IMR-90 (cell line): ENCODE measurements at regions of chr1 and their contacts with region 1.

Region 1: DNA sequence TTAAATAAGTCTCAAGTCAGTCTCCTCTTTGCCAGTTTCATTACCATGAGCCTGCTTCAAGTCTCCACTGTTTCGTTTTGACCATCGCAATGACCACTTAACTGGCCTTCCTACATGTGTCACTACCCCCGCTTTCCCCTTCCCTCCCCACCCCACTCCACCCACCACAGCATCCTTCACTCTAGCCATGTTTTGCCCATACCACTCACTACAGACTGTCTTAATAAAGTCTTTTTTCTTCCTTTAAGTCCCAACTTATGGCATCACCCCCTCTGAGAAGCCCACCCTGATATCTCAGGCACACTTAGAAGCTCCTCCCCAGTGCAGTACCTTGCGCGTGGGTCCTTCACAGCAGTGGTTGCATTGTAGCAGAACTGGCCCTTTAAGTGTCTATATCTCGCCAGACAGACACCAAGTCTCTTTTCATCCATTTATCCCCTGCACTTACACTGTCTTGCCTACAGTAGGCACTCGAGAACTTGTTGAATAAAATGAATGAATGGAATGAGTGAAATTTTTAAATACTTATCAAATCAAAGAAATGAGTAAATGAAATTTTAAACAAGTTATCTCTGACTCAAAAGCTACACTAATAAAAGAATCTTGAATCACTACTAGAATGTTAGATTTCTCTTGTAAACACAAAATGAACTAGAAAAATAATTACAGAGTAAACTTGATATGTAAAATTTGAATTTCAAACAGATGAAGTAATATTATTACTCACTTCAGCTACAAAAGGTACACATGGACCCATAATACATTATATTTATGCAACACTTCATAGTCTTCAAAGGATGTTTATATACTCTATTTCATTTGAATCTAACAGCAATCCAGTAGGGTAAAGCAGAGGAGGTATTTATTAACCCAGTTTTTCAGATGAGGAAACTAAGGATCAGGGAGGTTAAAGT is 54.8 kb upstream of the MAN1A2 start:
- DNase-seq: peak; percentile 83
- ATAC-seq: peak; percentile 96
- H3K4me3 ChIP-seq: no peak overlapping the region
- H3K27ac ChIP-seq: peak overlapping the region; percentile 55; the same call in 1 of the 2 replicates
- H3K4me1 ChIP-seq: peaks cover 2% of the 10 kb centered on the region
- H3K27me3 ChIP-seq: peaks cover 2% of the 10 kb centered on the region; the same call in 1 of the 2 replicates
- CTCF ChIP-seq: peak; percentile 67
- POLR2A ChIP-seq: no peak
- RAD21 ChIP-seq: peak; percentile 49

Region 2: DNA sequence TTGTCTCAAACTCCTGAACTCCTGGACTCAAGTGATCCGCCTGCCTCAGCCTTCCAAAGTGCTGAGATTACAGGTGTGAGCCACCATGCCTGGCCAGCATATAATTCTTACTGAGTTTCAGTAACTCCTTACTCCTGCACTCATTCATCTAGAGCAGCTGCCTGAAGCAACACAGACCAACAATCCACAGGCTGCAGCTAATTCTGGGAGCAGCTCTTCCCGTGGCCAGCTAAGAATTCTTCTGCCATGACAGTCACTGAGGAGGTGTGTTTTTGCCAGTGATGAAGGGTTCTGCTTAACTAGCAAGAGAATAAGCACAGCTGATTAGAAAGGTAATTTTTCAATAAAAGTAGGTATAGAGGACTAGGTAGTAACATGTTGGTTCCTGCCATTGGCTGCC is 107.1 kb before region 1 on chr1:
- CTCF ChIA-PET with region 1: no interaction called
- POLR2A ChIA-PET with region 1: no interaction called
- dilution Hi-C with region 1: no loop called
- in situ Hi-C with region 1: no loop called
- intact Hi-C with region 1: no loop called
- DNase-seq: peak; percentile 2
- ATAC-seq: no peak
- H3K4me3 ChIP-seq: no peak overlapping the region
- H3K27ac ChIP-seq: no peak overlapping the region
- H3K4me1 ChIP-seq: no peaks in the 10 kb centered on the region
- H3K27me3 ChIP-seq: peaks cover 44% of the 10 kb centered on the region
- CTCF ChIP-seq: no peak
- POLR2A ChIP-seq: no peak
- RAD21 ChIP-seq: no peak

Region 3: GRCh38 chr1:117367047-117368018 is 54.9 kb after region 1 on chr1 and contains the start of gene MAN1A2:
- CTCF ChIA-PET with region 1: no interaction called
- POLR2A ChIA-PET with region 1: no interaction called
- dilution Hi-C with region 1: no loop called
- in situ Hi-C with region 1: no loop called
- intact Hi-C with region 1: loop called (anchors 1 kb)
- DNase-seq: peak; percentile 69
- ATAC-seq: peak; percentile 83
- H3K4me3 ChIP-seq: peak within 1 kb of the TSS; percentile 90
- H3K27ac ChIP-seq: peak within 1 kb of the TSS; percentile 97
- H3K4me1 ChIP-seq: peaks cover 6% of the 10 kb centered on the region
- H3K27me3 ChIP-seq: no peaks in the 10 kb centered on the region
- CTCF ChIP-seq: no peak
- POLR2A ChIP-seq: no peak
- RAD21 ChIP-seq: no peak
- total RNA-seq, gene MAN1A2: 29.4 and 60.8 TPM in 2 replicates

Region 4: DNA sequence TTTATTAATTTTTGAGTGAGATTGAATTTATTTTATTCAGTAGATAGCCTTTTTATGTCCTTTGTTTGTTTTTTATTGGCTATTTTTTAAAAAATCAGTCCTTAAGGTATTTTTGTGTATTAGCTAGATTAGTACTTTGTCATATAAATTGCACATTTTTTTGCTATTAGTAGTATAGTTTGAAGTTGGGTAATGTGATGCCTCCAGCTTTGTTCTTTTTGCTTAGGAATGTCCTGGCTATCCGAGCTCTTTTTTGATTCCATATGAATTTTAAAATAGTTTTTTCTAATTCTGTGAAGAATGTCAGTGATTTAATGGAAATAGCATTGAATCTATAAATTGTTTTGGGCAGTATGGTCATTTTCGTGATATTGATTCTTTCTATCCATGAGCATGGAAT is 135.2 kb after region 1 on chr1:
- CTCF ChIA-PET with region 1: no interaction called
- POLR2A ChIA-PET with region 1: no interaction called
- dilution Hi-C with region 1: no loop called
- in situ Hi-C with region 1: no loop called
- intact Hi-C with region 1: loop called (anchors 10 kb)
- DNase-seq: peak; percentile 34
- ATAC-seq: peak; percentile 70
- H3K4me3 ChIP-seq: no peak overlapping the region
- H3K27ac ChIP-seq: no peak overlapping the region
- H3K4me1 ChIP-seq: peaks cover 3% of the 10 kb centered on the region; the same call in 1 of the 2 replicates
- H3K27me3 ChIP-seq: no peaks in the 10 kb centered on the region
- CTCF ChIP-seq: no peak
- POLR2A ChIP-seq: no peak
- RAD21 ChIP-seq: no peak